Panc1 (cell line): ENCODE measurements at regions of chr11 and their contacts with region 1.

Region 1: GRCh38 chr11:68962527-68963250 is 18.1 kb downstream of the MRGPRD start:
- DNase-seq: no peak
- ATAC-seq: no peak
- H3K4me3 ChIP-seq: no peak overlapping the region
- H3K27ac ChIP-seq: no peak overlapping the region
- H3K4me1 ChIP-seq: no peaks in the 10 kb centered on the region; the same call in 1 of the 2 replicates
- H3K27me3 ChIP-seq: no peaks in the 10 kb centered on the region
- CTCF ChIP-seq: no peak

Region 2: DNA sequence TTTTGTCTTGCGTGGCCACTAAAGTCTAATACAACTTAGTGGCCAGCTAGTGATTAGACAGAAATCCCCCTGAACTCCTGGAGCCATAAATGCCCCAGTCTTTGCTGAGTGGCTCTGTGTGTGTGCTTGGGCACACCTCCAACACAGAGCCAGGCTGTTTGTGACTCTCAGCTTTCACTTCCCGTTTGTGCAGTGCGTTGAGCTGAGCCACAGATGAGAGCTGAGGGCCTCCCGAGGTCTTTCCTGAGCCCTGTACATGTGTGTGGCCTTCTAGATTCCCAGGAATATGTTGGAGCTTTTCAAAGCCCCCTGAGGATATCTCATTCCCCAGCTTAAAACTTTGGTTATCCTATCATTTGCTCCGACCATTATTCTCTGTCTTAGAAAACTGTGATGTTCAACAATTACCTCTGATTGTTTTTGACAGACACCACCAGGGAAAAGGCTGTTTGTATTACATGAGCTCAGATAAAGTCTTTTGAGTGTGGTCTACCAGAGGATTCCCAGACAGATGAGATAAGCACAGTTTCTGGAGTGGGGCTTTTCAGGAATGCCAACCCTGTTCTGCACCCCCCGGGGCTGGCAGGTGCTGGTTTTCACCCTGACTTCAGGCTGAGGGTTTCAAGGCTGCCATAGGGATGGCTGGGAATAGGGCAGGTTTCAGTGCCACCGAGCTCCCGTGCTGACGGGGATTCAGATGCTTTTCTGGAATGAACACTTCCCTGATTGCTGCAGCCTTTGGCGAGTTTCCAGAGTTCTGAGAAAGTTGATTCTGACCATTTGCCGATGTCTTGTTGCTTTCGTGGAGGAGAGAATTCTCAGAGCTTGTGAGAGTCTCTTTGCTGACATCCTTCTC is 35.2 kb before region 1 on chr11:
- CTCF ChIA-PET with region 1: no interaction called
- POLR2A ChIA-PET with region 1: interaction called, 11 read pairs
- in situ Hi-C with region 1: no loop called
- intact Hi-C with region 1: no loop called
- DNase-seq: no peak
- ATAC-seq: no peak
- H3K4me3 ChIP-seq: no peak overlapping the region
- H3K27ac ChIP-seq: no peak overlapping the region
- H3K4me1 ChIP-seq: no peaks in the 10 kb centered on the region
- H3K27me3 ChIP-seq: no peaks in the 10 kb centered on the region
- CTCF ChIP-seq: no peak

Region 3: DNA sequence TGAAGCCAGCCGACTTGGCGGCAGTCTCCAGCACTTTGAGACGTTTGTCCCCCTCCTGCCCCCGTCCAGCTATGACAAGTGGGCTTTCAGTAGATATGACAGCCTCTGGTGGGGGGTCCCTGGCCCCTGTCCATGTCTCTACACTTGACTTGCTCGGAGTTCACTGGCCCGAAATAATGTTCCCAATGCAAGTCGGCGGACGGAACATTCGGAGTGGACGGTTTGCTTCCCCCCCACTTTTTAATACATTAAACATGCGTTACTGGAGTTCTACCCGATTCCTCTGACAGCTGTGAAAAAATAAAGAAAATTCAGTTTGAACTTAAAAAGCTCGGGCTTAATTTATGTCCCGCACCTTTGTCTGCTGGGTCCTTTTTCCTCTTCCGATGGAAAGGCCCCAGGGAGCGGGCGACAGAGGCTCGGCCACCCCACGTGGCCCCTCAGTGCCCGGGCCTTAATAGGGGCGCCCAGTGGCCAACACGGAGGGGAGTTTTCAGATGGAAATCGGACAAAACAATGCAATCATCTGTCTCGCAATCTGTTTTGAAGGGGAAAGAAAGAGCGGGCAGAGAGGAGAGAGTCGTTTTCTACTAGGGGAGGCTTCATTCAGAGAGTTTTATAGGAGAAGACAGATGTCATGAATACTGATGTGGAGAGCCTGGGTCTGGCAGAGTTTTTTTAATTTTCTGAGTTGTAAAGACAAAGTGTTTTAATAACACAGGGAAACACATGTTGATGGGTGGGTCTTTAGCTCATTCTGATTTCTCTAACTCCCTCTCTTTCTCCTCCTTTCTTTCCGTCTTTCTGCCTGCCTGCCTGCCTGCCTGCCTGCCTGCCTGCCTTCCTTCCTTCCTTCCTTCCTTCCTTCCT is 243.3 kb after region 1 on chr11:
- CTCF ChIA-PET with region 1: no interaction called
- POLR2A ChIA-PET with region 1: interaction called, 17 read pairs
- in situ Hi-C with region 1: no loop called
- intact Hi-C with region 1: no loop called
- DNase-seq: no peak
- ATAC-seq: no peak
- H3K4me3 ChIP-seq: no peak overlapping the region
- H3K27ac ChIP-seq: no peak overlapping the region
- H3K4me1 ChIP-seq: no peaks in the 10 kb centered on the region
- H3K27me3 ChIP-seq: no peaks in the 10 kb centered on the region
- CTCF ChIP-seq: no peak